Mammary epithelial cell (primary cell): ENCODE measurements at regions of chr5 and their contacts with region 1.

Region 1: DNA sequence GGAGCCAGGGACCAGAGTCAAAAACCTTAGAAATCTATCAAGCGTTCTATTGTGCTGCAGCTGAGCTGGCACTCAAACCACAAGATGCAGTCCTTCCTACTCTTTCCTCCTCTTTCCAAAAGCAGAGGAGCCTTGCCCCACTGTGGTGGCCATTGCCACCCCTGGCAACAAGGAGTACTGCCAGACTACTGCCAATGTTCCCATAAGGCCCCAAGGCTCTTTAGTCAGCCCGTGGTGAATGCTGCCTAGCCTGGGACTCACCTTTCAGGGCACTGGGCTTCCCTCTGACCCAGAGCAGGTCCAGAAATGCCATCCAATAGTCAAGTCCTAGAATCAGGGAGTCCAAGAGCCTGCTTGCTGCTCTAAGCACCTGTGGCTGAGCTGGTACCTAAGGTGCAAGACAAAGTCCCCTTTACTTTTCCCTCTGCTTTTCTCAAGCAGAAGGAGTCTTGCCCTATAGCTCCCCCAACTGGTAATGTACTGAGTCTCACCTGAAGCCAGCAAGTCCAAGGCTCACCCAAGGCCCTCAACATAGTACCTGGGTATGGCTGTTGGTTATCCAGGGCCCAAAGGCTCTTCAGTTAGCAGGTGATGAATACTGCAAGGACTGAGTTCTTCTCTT is 219.4 kb downstream of the ATPSCKMT start:
- DNase-seq: peak; percentile 30
- H3K4me3 ChIP-seq: no peak overlapping the region
- H3K27ac ChIP-seq: no peak overlapping the region
- H3K4me1 ChIP-seq: no peaks in the 10 kb centered on the region
- H3K27me3 ChIP-seq: no peaks in the 10 kb centered on the region
- CTCF ChIP-seq: peak; percentile 30 to 62

Region 2: GRCh38 chr5:9156282-9156681 is 874.0 kb before region 1 on chr5:
- CTCF ChIA-PET with region 1: no interaction called
- dilution Hi-C with region 1: no loop called
- in situ Hi-C with region 1: no loop called
- intact Hi-C with region 1: loop called (anchors 5 kb)
- DNase-seq: peak; percentile 46
- H3K4me3 ChIP-seq: no peak overlapping the region
- H3K27ac ChIP-seq: no peak overlapping the region
- H3K4me1 ChIP-seq: no peaks in the 10 kb centered on the region
- H3K27me3 ChIP-seq: no peaks in the 10 kb centered on the region
- CTCF ChIP-seq: peak; percentile 62 to 81

Region 3: GRCh38 chr5:9716838-9717281 is 313.5 kb before region 1 on chr5:
- CTCF ChIA-PET with region 1: no interaction called
- dilution Hi-C with region 1: no loop called
- in situ Hi-C with region 1: no loop called
- intact Hi-C with region 1: loop called (anchors 10 kb)
- DNase-seq: peak; percentile 67
- H3K4me3 ChIP-seq: no peak overlapping the region
- H3K27ac ChIP-seq: no peak overlapping the region
- H3K4me1 ChIP-seq: peaks cover 4% of the 10 kb centered on the region
- H3K27me3 ChIP-seq: no peaks in the 10 kb centered on the region
- CTCF ChIP-seq: no peak

Region 4: DNA sequence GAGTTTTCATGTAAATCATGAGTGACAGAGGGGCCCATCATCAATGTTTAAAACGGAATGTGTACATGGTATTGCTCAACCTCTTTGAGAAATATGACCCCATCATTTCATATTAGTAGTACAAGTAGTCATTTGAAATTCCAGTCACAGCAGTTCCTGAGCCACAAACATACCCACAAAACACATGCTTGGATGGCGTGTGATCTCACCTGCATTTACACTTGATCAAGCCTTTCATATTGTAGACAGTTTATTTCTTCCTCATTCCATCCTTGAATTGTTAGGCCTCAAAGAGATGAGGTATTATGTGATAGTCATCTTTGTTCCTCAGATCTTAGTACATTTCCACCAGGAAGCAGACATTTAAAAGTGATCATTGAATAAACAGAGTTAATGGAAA is 303.4 kb before region 1 on chr5:
- CTCF ChIA-PET with region 1: no interaction called
- dilution Hi-C with region 1: no loop called
- in situ Hi-C with region 1: no loop called
- intact Hi-C with region 1: no loop called
- DNase-seq: no peak
- H3K4me3 ChIP-seq: no peak overlapping the region
- H3K27ac ChIP-seq: no peak overlapping the region
- H3K4me1 ChIP-seq: no peaks in the 10 kb centered on the region
- H3K27me3 ChIP-seq: no peaks in the 10 kb centered on the region
- CTCF ChIP-seq: no peak

Region 5: GRCh38 chr5:9851458-9851857 is 178.9 kb before region 1 on chr5:
- CTCF ChIA-PET with region 1: no interaction called
- dilution Hi-C with region 1: no loop called
- in situ Hi-C with region 1: no loop called
- intact Hi-C with region 1: loop called (anchors 1 kb)
- DNase-seq: peak; percentile 23
- H3K4me3 ChIP-seq: no peak overlapping the region
- H3K27ac ChIP-seq: no peak overlapping the region
- H3K4me1 ChIP-seq: no peaks in the 10 kb centered on the region
- H3K27me3 ChIP-seq: no peaks in the 10 kb centered on the region
- CTCF ChIP-seq: peak in 1 of 2 donors; percentile 38

Region 6: DNA sequence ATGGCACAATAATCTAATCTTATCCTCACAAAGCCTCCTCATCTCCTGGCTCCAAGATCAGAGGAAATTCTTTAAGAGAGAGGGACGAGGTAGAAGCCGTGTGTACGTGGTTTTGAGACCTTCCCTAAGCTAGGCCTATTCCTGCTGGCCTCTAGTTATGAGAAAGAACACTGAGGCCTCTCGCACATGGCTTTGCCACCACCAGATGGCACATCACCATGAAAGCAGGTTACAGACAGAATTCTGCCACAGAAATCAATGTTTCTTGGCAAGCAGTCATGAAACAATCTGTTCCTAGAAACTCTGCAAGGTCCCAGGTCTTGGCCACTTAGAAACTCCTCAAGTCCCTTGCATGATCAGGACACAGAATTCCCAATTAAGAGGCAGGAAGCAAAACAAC is 132.0 kb before region 1 on chr5:
- CTCF ChIA-PET with region 1: no interaction called
- dilution Hi-C with region 1: no loop called
- in situ Hi-C with region 1: no loop called
- intact Hi-C with region 1: loop called (anchors 1 kb)
- DNase-seq: peak; percentile 13
- H3K4me3 ChIP-seq: no peak overlapping the region
- H3K27ac ChIP-seq: no peak overlapping the region
- H3K4me1 ChIP-seq: no peaks in the 10 kb centered on the region
- H3K27me3 ChIP-seq: no peaks in the 10 kb centered on the region
- CTCF ChIP-seq: peak; percentile 49 to 74

Region 7: GRCh38 chr5:10124287-10124686 is 94.0 kb after region 1 on chr5:
- CTCF ChIA-PET with region 1: no interaction called
- dilution Hi-C with region 1: no loop called
- in situ Hi-C with region 1: no loop called
- intact Hi-C with region 1: no loop called
- DNase-seq: no peak
- H3K4me3 ChIP-seq: no peak overlapping the region
- H3K27ac ChIP-seq: no peak overlapping the region
- H3K4me1 ChIP-seq: no peaks in the 10 kb centered on the region
- H3K27me3 ChIP-seq: no peaks in the 10 kb centered on the region
- CTCF ChIP-seq: no peak

Region 8: DNA sequence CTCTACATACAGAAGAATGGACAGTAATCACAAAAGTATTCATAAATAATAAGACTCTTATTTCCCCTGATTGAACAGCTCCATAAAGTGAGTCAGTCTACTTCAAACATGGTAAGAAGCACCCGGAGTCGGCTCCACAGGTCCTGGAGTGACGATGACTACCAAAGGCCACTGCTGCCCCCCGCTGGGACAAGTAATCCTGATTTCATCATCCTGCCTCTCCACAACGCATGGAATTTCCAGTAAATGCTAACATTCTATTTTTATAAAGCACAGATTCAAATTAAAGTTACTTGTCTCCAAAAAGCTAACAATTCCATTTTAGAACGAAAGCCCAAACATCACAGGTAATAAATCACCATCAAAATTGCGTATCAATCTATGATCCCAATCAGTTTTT is 203.2 kb after region 1 on chr5:
- CTCF ChIA-PET with region 1: no interaction called
- dilution Hi-C with region 1: no loop called
- in situ Hi-C with region 1: no loop called
- intact Hi-C with region 1: no loop called
- DNase-seq: peak; percentile 12
- H3K4me3 ChIP-seq: no peak overlapping the region
- H3K27ac ChIP-seq: no peak overlapping the region
- H3K4me1 ChIP-seq: no peaks in the 10 kb centered on the region
- H3K27me3 ChIP-seq: no peaks in the 10 kb centered on the region
- CTCF ChIP-seq: peak in 1 of 2 donors; percentile 2